Activated CD8-positive, alpha-beta memory T cell treated with anti-CD3 and anti-CD28 coated beads, Interleukin-2, amount 10 ng/mL, durations not matched to agents 7 days and 5 days (primary cell): ENCODE measurements at regions of chr19 and their contacts with region 1.

Region 1: DNA sequence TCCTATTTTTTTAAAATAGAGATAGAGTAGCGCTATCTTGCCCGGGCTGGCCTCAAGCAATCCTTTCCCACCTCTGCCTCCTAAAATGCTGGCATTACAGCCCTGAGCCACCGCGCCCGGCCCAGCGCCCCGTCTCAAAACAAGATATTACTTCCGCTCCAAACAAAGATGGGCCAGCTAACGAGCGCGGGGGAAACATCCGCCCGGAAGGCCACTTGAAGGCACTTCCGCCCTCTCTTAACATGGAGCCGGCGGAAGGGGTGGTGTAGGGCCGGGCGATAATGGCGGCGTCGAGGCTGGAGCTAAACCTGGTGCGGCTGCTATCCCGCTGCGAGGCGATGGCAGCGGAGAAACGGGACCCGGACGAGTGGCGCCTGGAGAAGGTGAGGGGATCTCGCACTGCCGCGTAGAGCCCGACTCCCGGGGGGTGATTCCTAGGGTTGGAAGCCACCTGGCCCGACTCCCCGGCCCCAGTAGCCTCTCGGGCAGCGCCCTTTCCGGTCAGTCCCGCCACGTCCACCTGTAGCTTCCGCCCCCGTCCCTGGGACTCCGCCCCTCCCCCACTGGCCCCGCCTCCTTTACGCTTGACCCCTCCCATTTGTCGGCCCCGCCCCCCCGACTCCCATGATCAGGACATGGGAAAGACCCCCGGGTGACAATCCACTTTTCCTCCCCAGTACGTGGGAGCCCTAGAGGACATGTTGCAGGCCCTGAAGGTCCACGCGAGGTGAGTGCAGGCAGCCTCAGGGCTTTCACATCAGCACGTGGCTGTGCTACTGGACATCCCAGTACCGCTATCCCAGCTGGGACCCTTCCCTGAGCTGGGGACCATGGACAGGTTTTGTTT is at the start of gene USE1:
- DNase-seq: peak; percentile 94
- ATAC-seq: peak; percentile 97
- H3K4me3 Mint-ChIP-seq: peak within 1 kb of the TSS; percentile 76
- H3K27ac Mint-ChIP-seq: peak within 1 kb of the TSS; percentile 94
- H3K4me1 Mint-ChIP-seq: peaks cover 15% of the 10 kb centered on the region
- H3K27me3 Mint-ChIP-seq: no peaks in the 10 kb centered on the region
- total RNA-seq, gene USE1: 22.1 to 23.6 TPM

Region 2: GRCh38 chr19:17226002-17226933 is 10.9 kb after region 1 on chr19 and contains the start of gene OCEL1:
- CTCF ChIA-PET with region 1: interaction called, 14 read pairs
- DNase-seq: peak; percentile 99
- ATAC-seq: peak; percentile 95
- H3K4me3 Mint-ChIP-seq: peak within 1 kb of the TSS; percentile 91
- H3K27ac Mint-ChIP-seq: peak within 1 kb of the TSS; percentile 99
- H3K4me1 Mint-ChIP-seq: peaks cover 11% of the 10 kb centered on the region
- H3K27me3 Mint-ChIP-seq: no peaks in the 10 kb centered on the region
- total RNA-seq, gene OCEL1: 23.3 to 27.4 TPM

Region 3: GRCh38 chr19:17311455-17312248 is 96.3 kb after region 1 on chr19:
- CTCF ChIA-PET with region 1: no interaction called
- DNase-seq: no peak
- ATAC-seq: no peak
- H3K4me3 Mint-ChIP-seq: no peak overlapping the region
- H3K27ac Mint-ChIP-seq: peak overlapping the region; percentile 39
- H3K4me1 Mint-ChIP-seq: peaks cover 40% of the 10 kb centered on the region
- H3K27me3 Mint-ChIP-seq: no peaks in the 10 kb centered on the region